Caco-2 (cell line): ENCODE measurements at regions of chr15 and their contacts with region 1.

Region 1: DNA sequence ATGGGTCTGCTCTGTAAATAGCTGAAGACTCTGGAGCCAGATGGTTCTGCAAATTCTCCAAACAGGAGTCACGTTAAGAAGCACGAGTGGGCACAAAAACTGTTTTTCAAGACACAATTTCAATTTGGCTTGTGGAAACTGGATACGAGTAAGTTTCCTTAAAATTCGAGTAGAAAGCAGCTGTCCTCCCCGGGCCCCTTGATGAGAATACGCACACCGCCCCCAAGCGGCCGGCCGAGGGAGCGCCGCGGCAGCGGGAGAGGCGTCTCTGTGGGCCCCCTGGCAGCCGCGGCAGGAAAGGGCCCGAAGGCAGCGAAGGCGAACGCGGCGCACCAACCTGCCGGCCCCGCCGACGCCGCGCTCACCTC is 778 bp upstream of the THBS1 start:
- DNase-seq: peak; percentile 85 to 93
- H3K4me3 ChIP-seq: peak overlapping the region; percentile 84
- H3K4me3 Mint-ChIP-seq: peak overlapping the region; percentile 78
- H3K27ac Mint-ChIP-seq: peak overlapping the region; percentile 43
- H3K4me1 ChIP-seq: peaks cover 26% of the 10 kb centered on the region; the same call in 1 of the 2 replicates
- H3K4me1 Mint-ChIP-seq: peaks cover under 1% of the 10 kb centered on the region
- H3K27me3 ChIP-seq: no peaks in the 10 kb centered on the region
- H3K27me3 Mint-ChIP-seq: no peaks in the 10 kb centered on the region
- CTCF ChIP-seq: peak; percentile 88 to 95

Region 2: DNA sequence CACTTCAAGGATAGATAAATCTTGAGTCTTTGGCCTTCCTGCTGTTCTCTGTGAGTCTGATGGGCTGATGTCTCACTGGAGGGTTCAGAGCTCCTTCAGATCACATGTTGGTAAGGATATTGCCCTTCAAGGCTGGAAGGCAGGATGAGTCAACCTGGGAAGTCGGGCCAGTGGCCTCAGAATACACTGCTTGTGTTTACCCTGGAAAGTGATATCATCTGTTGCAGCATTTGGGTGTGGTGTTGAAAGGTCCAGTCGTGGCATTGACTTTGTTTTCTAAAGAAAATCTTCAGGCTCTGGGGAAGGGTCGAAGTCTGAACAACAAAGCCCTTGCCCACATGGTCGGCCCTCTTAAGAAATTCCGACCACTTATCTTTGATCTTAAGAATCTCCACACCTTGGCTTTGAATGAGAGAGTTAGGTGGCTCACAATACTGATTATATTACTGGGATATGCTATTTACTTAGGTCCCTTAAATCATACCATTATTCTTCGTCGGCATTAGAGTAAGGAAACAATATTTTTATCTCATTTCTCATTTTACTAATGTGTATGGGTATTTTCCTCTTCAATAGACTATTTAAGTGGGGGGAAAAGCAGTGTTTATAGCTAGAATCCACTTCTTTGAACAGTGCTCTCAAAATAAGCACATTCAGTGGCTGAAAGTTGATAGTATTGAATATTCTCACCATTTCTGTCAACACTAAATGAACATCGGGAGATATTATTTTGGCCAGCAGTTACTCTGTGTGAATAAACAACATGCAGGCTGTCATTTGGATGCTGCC is 711.6 kb before region 1 on chr15:
- CTCF ChIA-PET with region 1: no interaction called
- POLR2A ChIA-PET with region 1: no interaction called
- intact Hi-C with region 1: loop called (anchors 1 kb)
- DNase-seq: peak; percentile 71 to 79
- H3K4me3 ChIP-seq: no peak overlapping the region
- H3K4me3 Mint-ChIP-seq: no peak overlapping the region
- H3K27ac Mint-ChIP-seq: no peak overlapping the region
- H3K4me1 ChIP-seq: peaks cover 29% of the 10 kb centered on the region
- H3K4me1 Mint-ChIP-seq: peaks cover 13% of the 10 kb centered on the region
- H3K27me3 ChIP-seq: no peaks in the 10 kb centered on the region
- H3K27me3 Mint-ChIP-seq: no peaks in the 10 kb centered on the region
- CTCF ChIP-seq: no peak

Region 3: DNA sequence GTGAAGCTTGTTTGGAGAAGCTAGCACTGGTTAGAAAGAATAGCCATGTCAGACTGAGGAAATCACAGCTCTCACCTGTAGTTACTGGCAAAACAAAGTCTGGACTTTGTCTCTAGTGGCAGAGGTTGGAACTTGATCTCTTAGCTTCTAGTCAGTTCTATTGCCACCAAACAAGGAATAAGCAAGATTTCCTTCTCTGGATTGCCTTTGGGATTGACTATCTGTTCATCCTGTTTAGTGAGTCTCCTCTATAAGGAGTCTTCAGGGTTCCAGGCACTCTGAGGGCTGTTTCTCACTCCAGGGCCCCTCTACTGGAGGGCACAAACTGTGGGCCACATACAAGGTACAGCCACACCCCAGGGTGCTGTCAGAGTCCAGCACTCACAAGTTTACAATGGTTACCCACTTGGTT is 425.9 kb before region 1 on chr15:
- CTCF ChIA-PET with region 1: no interaction called
- POLR2A ChIA-PET with region 1: no interaction called
- intact Hi-C with region 1: no loop called
- DNase-seq: peak in 1 of 2 experiments; percentile 39
- H3K4me3 ChIP-seq: no peak overlapping the region
- H3K4me3 Mint-ChIP-seq: no peak overlapping the region
- H3K27ac Mint-ChIP-seq: peak overlapping the region; percentile 46
- H3K4me1 ChIP-seq: peaks cover 20% of the 10 kb centered on the region
- H3K4me1 Mint-ChIP-seq: peaks cover 6% of the 10 kb centered on the region
- H3K27me3 ChIP-seq: no peaks in the 10 kb centered on the region
- H3K27me3 Mint-ChIP-seq: no peaks in the 10 kb centered on the region
- CTCF ChIP-seq: peak; percentile 34 to 38

Region 4: GRCh38 chr15:39213385-39213840 is 366.7 kb before region 1 on chr15:
- CTCF ChIA-PET with region 1: interaction called, 4 read pairs
- POLR2A ChIA-PET with region 1: interaction called, 11 read pairs
- intact Hi-C with region 1: no loop called
- DNase-seq: peak; percentile 82 to 92
- H3K4me3 ChIP-seq: no peak overlapping the region
- H3K4me3 Mint-ChIP-seq: peak overlapping the region; percentile 57
- H3K27ac Mint-ChIP-seq: peak overlapping the region; percentile 97
- H3K4me1 ChIP-seq: peaks cover 17% of the 10 kb centered on the region
- H3K4me1 Mint-ChIP-seq: peaks cover 19% of the 10 kb centered on the region
- H3K27me3 ChIP-seq: no peaks in the 10 kb centered on the region
- H3K27me3 Mint-ChIP-seq: no peaks in the 10 kb centered on the region
- CTCF ChIP-seq: no peak

Region 5: DNA sequence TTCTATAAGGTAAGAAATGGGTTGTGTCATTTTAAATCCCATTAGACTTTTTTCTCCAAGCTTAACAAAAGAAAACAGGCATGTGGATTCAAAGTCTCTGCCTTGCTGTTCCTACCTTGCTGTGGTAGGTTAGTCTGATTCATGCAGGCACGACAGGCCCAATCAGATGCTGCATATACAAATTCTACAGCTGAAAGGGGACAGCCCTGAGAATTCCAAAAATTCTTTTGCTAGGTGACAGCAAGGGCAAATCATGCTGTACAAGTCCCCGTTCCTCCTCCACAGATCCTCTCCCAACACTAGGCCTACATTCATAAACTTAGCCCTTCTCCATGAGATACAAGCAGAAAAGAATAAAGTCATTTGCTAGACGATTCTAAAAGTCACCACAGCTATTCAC is 160.4 kb before region 1 on chr15:
- CTCF ChIA-PET with region 1: interaction called, 5 read pairs
- POLR2A ChIA-PET with region 1: no interaction called
- intact Hi-C with region 1: loop called (anchors 2 kb)
- DNase-seq: peak; percentile 67 to 79
- H3K4me3 ChIP-seq: peak overlapping the region; percentile 41
- H3K4me3 Mint-ChIP-seq: peak overlapping the region; percentile 74
- H3K27ac Mint-ChIP-seq: peak overlapping the region; percentile 89
- H3K4me1 ChIP-seq: peaks cover 18% of the 10 kb centered on the region
- H3K4me1 Mint-ChIP-seq: peaks cover 7% of the 10 kb centered on the region
- H3K27me3 ChIP-seq: no peaks in the 10 kb centered on the region
- H3K27me3 Mint-ChIP-seq: no peaks in the 10 kb centered on the region
- CTCF ChIP-seq: no peak

Region 6: GRCh38 chr15:39511916-39512260 is 68.2 kb before region 1 on chr15:
- CTCF ChIA-PET with region 1: no interaction called
- POLR2A ChIA-PET with region 1: no interaction called
- intact Hi-C with region 1: no loop called
- DNase-seq: no peak
- H3K4me3 ChIP-seq: no peak overlapping the region
- H3K4me3 Mint-ChIP-seq: no peak overlapping the region
- H3K27ac Mint-ChIP-seq: no peak overlapping the region
- H3K4me1 ChIP-seq: no peaks in the 10 kb centered on the region
- H3K4me1 Mint-ChIP-seq: no peaks in the 10 kb centered on the region
- H3K27me3 ChIP-seq: no peaks in the 10 kb centered on the region
- H3K27me3 Mint-ChIP-seq: no peaks in the 10 kb centered on the region
- CTCF ChIP-seq: no peak

Region 7: DNA sequence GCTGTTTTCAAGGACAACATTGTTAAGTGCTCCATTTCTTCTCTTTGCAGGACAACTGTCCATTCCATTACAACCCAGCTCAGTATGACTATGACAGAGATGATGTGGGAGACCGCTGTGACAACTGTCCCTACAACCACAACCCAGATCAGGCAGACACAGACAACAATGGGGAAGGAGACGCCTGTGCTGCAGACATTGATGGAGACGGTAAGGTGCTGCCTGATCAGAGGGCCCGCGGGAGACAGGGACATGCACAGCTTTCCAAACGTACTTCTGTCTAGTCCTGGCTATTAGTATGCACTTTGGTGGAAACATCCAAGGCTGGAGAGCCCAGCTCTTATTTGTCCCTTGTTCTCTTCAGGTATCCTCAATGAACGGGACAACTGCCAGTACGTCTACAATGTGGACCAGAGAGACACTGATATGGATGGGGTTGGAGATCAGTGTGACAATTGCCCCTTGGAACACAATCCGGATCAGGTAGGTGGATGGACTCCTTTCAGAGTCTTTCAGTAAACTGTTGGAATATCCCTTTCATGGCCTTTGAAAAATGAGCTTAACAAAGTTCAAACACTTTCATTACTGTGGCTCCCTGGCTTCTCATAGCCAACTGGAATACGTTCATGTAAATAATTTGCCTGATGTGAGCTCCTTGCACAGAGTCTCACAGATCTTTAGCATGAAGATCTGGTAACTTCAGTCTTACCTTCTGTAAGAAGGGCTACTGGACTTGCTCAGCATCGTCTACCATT is 11.2 kb after region 1 on chr15:
- CTCF ChIA-PET with region 1: interaction called, 3 read pairs
- POLR2A ChIA-PET with region 1: interaction called, 14 read pairs
- intact Hi-C with region 1: no loop called
- DNase-seq: no peak
- H3K4me3 ChIP-seq: no peak overlapping the region
- H3K4me3 Mint-ChIP-seq: no peak overlapping the region
- H3K27ac Mint-ChIP-seq: no peak overlapping the region
- H3K4me1 ChIP-seq: peaks cover 8% of the 10 kb centered on the region
- H3K4me1 Mint-ChIP-seq: peaks cover 17% of the 10 kb centered on the region
- H3K27me3 ChIP-seq: no peaks in the 10 kb centered on the region
- H3K27me3 Mint-ChIP-seq: no peaks in the 10 kb centered on the region
- CTCF ChIP-seq: no peak

Region 8: GRCh38 chr15:39613271-39613670 is 33.2 kb after region 1 on chr15:
- CTCF ChIA-PET with region 1: no interaction called
- POLR2A ChIA-PET with region 1: no interaction called
- intact Hi-C with region 1: no loop called
- DNase-seq: no peak
- H3K4me3 ChIP-seq: no peak overlapping the region
- H3K4me3 Mint-ChIP-seq: no peak overlapping the region
- H3K27ac Mint-ChIP-seq: no peak overlapping the region
- H3K4me1 ChIP-seq: no peaks in the 10 kb centered on the region
- H3K4me1 Mint-ChIP-seq: no peaks in the 10 kb centered on the region
- H3K27me3 ChIP-seq: no peaks in the 10 kb centered on the region
- H3K27me3 Mint-ChIP-seq: no peaks in the 10 kb centered on the region
- CTCF ChIP-seq: no peak